ENCODE measurements at regions of chr5 and their contacts with region 1.

Region 1: DNA sequence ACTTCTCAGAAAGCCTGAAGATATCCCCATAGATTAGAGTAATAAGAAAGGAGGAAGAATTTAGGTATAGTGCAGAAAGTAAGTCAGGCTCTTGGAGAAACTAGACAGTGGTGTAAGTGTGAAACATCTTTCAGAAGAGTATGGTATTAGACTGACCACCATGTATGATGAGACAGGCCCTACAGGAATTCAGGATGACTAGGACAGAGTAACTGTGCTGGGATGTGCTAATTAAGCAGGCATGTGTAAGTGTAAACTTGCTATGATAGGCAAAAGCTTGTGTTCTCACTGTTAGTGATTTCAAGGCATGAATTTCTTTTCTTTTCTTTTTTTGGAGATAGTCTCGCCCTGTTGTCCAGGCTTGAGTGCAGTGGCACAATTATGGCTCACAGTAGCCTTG is 70.8 kb downstream of the RAB24 start:
- DNase-seq: no peak
- H3K4me3 ChIP-seq: no peak overlapping the region
- H3K27ac ChIP-seq: no peak overlapping the region
- H3K4me1 ChIP-seq: no peaks in the 10 kb centered on the region
- H3K27me3 ChIP-seq: no peaks in the 10 kb centered on the region
- CTCF ChIP-seq: no peak
- EP300 ChIP-seq: no peak
- POLR2A ChIP-seq: no peak

Region 2: GRCh38 chr5:177099422-177100093 is 133.2 kb before region 1 on chr5:
- intact Hi-C with region 1: loop called in 1 of 4 experiments (anchors 10 kb)
- DNase-seq: no peak
- H3K4me3 ChIP-seq: no peak overlapping the region
- H3K27ac ChIP-seq: no peak overlapping the region
- H3K4me1 ChIP-seq: peaks cover 30% of the 10 kb centered on the region
- H3K27me3 ChIP-seq: no peaks in the 10 kb centered on the region
- CTCF ChIP-seq: no peak
- EP300 ChIP-seq: no peak
- POLR2A ChIP-seq: no peak